ENCODE measurements at regions of chr1 and their contacts with region 1.

Region 1: DNA sequence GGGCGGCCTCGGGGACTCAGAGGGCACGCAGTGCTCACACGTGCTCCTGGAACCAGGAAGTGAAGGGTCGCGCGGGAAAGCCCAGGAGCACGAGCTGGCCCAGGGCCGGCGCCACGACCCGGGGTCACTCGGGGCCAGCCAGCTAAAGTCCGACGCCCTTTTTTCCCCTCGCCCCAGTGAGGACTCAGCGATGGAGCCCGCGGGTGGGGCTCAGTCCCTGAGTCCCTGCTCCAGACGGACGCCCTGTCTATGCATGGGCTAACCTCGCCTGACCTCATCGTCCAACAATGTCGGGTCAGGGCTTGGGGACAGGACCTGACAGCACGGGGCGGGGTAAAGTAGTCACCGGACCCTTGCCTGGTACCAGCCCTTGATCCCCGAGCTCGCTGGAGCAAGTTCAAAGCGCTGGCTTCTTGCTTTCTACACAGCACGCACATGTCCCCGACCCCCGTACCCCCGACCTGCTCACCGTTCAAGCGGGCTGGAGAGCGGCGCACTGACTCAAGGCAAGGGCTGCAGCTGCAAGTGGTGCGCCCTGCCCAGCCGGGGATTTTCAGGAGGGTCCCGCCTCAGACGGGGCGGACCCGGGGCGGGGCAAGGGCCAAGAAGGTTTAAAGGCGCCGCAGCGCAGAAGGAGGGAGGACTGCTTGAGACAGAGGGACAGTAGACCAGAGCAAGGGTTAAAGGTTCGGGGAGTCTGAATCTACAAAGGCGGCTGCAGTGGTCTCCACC is at the start of gene TAGLN2:
- DNase-seq: peak in 1 of 2 experiments; percentile 92
- H3K4me3 ChIP-seq: peak within 1 kb of the TSS; percentile 55 to 63 (median 59)
- H3K27ac ChIP-seq: no peak within 1 kb of the TSS
- H3K4me1 ChIP-seq: peaks cover 5 to 21% (median 16%) of the 10 kb centered on the region in 4 experiments
- H3K27me3 ChIP-seq: peaks cover 0 to 17% (median 8%) of the 10 kb centered on the region in 4 experiments; a peak in 5 of 7 replicates
- CTCF ChIP-seq: no peak; a peak in 1 of 4 replicates
- EP300 ChIP-seq: no peak
- POLR2A ChIP-seq: peak in 1 of 2 experiments; percentile 74; a peak in 2 of 3 replicates
- RAD21 ChIP-seq: peak in 1 of 2 experiments; percentile 16; a peak in 1 of 4 replicates
- total RNA-seq, gene TAGLN2: 86.0 and 93.0 TPM in 2 replicates

Region 2: GRCh38 chr1:159860426-159860825 is 64.7 kb before region 1 on chr1:
- CTCF ChIA-PET with region 1: no interaction called
- POLR2A ChIA-PET with region 1: no interaction called
- DNase-seq: no peak
- H3K4me3 ChIP-seq: no peak overlapping the region
- H3K27ac ChIP-seq: no peak overlapping the region
- H3K4me1 ChIP-seq: peaks cover 0 to 2% (median 0%) of the 10 kb centered on the region in 4 experiments; a peak in 2 of 7 replicates
- H3K27me3 ChIP-seq: peaks cover 0 to 11% (median 8%) of the 10 kb centered on the region in 4 experiments; a peak in 6 of 7 replicates
- CTCF ChIP-seq: no peak
- EP300 ChIP-seq: no peak
- POLR2A ChIP-seq: no peak
- RAD21 ChIP-seq: no peak

Region 3: GRCh38 chr1:159900086-159900680 is 25.0 kb before region 1 on chr1 and contains the start of gene CFAP45:
- CTCF ChIA-PET with region 1: interaction called, 124 read pairs
- POLR2A ChIA-PET with region 1: interaction called, 11 read pairs
- DNase-seq: peak in 1 of 2 experiments; percentile 79
- H3K4me3 ChIP-seq: peak within 1 kb of the TSS in 1 of 4 experiments; percentile 47; a peak in 4 of 8 replicates
- H3K27ac ChIP-seq: peak within 1 kb of the TSS; percentile 27; the same call in 1 of the 2 replicates
- H3K4me1 ChIP-seq: peaks cover 6 to 12% (median 7%) of the 10 kb centered on the region in 4 experiments
- H3K27me3 ChIP-seq: peaks cover 1 to 9% (median 7%) of the 10 kb centered on the region in 4 experiments; a peak in 5 of 7 replicates
- CTCF ChIP-seq: no peak
- EP300 ChIP-seq: no peak
- POLR2A ChIP-seq: no peak; a peak in 1 of 3 replicates
- RAD21 ChIP-seq: no peak
- total RNA-seq, gene CFAP45: not detected in 2 replicates

Region 4: GRCh38 chr1:159945483-159946241 is 20.5 kb after region 1 on chr1 and contains the start of gene IGSF9:
- CTCF ChIA-PET with region 1: interaction called, 10 read pairs
- POLR2A ChIA-PET with region 1: interaction called, 10 read pairs
- DNase-seq: peak; percentile 81 to 96
- H3K4me3 ChIP-seq: peak within 1 kb of the TSS; percentile 49 to 82 (median 62)
- H3K27ac ChIP-seq: peak within 1 kb of the TSS; percentile 80; the same call in 1 of the 2 replicates
- H3K4me1 ChIP-seq: peaks cover 7 to 24% (median 15%) of the 10 kb centered on the region in 4 experiments
- H3K27me3 ChIP-seq: no peaks in the 10 kb centered on the region
- CTCF ChIP-seq: peak; percentile 27 to 41 (median 40)
- EP300 ChIP-seq: no peak
- POLR2A ChIP-seq: peak; percentile 19 to 79
- RAD21 ChIP-seq: peak; percentile 37 to 44; a peak in 3 of 4 replicates
- total RNA-seq, gene IGSF9: 28.1 and 29.2 TPM in 2 replicates

Region 5: DNA sequence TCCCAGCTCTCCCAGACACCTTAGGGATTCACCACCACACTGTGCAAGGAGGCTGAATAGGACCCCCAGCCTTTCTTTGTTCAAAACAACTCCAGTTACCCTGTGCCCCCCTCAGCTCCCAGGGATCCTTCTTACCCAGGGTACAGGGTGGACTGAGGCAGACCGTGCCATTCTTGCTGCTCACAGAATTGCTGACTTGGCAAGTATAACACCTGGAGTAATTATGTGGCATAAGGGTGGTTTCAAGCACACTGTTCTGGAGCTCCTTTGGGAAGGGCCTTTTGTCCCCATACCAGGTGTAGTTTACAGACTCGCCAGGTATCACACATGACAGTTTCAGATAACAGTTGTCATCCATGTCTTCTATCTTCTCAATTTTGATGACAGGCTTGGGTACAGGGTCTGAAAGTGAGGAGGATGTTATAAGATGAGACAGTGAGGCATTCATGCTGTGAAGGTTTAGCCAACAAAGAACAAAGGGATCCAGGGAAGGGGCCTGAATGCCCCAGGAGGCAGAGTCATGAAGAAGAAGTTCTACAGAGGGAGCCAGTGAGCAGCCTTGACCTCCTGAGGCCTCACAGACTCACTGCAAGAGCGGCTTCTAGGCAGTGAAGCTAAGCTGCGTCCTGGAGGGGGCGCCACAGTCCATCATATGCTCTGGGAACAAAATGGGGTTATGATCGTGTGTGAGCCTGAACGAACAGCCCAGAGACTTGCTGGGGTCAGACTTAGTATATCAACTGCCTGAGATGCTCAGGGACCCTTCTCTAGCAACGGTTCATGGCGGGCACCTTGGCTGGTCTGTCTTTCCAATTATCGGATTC is 756.1 kb after region 1 on chr1:
- CTCF ChIA-PET with region 1: no interaction called
- POLR2A ChIA-PET with region 1: no interaction called
- DNase-seq: peak; percentile 90 to 92
- H3K4me3 ChIP-seq: no peak overlapping the region
- H3K27ac ChIP-seq: no peak overlapping the region
- H3K4me1 ChIP-seq: peaks cover 0 to 4% (median 0%) of the 10 kb centered on the region in 4 experiments; a peak in 1 of 7 replicates
- H3K27me3 ChIP-seq: no peaks in the 10 kb centered on the region
- CTCF ChIP-seq: peak; percentile 98 to 100 (median 99)
- EP300 ChIP-seq: no peak
- POLR2A ChIP-seq: no peak
- RAD21 ChIP-seq: peak; percentile 98 to 99

Measured in H1 (cell line).